ENCODE measurements at regions of chr6 and their contacts with region 1.

Region 1: DNA sequence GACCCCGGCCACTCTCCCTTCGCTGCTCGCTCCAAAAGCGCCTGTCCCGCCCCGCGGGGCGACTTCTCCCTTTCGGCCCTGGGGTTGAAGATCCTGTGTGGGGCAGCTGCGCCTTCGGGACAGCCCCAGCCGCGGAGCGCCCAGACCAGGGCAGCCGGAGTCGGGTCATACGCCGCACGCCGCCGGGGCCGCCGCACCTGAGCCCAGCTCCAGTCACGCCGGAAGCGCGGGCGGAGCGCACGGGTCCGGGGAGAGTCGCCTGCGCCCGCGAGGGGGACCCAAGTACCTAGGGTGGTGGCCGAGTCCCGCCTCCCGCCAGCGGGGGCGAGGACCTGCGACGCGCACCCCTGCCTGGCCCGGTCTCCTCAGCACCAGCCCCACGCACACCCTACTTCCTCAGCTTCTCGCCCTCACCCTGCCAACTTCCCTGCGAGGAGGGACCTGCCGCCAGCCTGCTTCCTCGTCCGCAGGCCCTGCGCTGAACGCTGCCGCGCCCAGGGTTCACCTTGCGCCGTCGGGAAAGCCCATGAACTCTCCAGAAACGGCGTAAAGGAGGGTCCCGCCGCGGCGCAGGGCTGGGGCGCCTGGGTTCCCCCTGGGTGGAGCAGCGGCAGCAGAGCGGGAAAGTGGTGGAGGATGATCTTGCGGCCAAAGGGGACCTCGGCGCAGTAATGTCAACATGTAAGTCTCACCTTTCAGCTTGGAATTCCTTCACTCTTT is at the start of gene ADGRG6:
- DNase-seq: peak; percentile 65
- H3K4me3 ChIP-seq: peak within 1 kb of the TSS; percentile 69 to 78 (median 70)
- H3K27ac ChIP-seq: peak within 1 kb of the TSS; percentile 78
- H3K4me1 ChIP-seq: peaks cover 43% of the 10 kb centered on the region
- H3K27me3 ChIP-seq: no peaks in the 10 kb centered on the region
- CTCF ChIP-seq: peak in 1 of 2 donors; percentile 25
- total RNA-seq, gene ADGRG6: 23.5 to 28.5 TPM

Region 2: GRCh38 chr6:142167486-142167885 is 134.3 kb before region 1 on chr6:
- CTCF ChIA-PET with region 1: no interaction called
- dilution Hi-C with region 1: no loop called
- in situ Hi-C with region 1: no loop called
- intact Hi-C with region 1: no loop called
- DNase-seq: no peak
- H3K4me3 ChIP-seq: no peak overlapping the region
- H3K27ac ChIP-seq: no peak overlapping the region
- H3K4me1 ChIP-seq: no peaks in the 10 kb centered on the region
- H3K27me3 ChIP-seq: no peaks in the 10 kb centered on the region
- CTCF ChIP-seq: no peak

Region 3: DNA sequence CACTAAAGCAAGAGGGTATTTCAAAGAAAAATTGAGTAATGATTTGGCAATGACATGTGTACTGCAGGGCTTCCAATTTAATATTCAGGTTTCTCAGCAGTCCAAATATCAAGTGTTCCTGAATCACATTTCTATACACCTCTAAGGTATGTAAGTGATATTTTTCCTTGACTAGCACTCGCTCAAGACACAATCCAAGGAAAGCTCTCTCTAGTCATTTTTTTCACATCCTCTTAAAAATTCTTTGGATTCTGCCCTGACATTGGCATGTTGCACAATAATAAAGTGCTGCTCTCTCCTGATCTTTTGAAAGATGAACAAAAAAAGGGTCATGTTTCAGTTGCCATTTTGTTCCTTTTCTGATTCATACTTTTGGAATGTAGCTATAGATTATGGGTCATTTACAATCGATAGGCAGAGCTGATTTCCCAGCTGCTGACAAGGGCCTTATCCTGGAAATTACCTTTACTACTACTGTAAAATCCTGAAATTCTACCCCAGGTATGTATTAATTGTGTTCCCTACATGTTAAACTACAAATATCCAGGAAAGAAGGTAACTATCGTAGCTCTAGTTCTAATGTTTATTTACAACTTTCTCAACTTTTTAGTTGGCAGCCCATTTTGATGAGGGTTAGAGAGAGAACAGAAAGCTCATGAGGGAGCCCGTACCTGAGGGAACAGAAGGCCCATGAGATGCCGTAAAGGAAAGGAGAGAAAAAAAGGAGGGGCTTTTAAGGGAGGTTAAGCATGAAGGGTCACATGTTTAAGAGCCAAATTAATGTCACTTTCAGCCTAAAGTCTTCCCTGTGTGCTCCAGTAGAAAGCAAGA is 22.2 kb before region 1 on chr6:
- CTCF ChIA-PET with region 1: no interaction called
- dilution Hi-C with region 1: no loop called
- in situ Hi-C with region 1: no loop called
- intact Hi-C with region 1: no loop called
- DNase-seq: no peak
- H3K4me3 ChIP-seq: no peak overlapping the region
- H3K27ac ChIP-seq: no peak overlapping the region
- H3K4me1 ChIP-seq: peaks cover 9% of the 10 kb centered on the region
- H3K27me3 ChIP-seq: no peaks in the 10 kb centered on the region
- CTCF ChIP-seq: no peak

Region 4: DNA sequence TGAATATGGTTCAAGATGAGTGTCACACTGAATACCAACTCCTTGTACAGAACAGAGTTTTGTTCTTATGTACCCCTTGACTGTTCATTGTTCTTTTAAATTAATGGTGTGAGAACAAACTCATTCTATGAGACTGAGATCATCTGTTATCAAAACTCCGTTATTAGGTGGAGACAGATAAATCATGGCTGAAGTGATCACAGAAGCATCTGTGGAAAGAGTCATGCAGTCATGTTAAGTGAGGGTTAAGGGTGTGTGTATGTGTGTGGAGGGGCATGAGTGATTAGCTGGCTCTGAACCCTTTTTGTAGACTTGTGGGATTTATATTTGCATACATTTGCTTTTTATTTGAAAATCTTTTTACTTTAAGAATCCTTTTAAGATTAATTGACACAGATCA is 24.7 kb after region 1 on chr6:
- CTCF ChIA-PET with region 1: no interaction called
- dilution Hi-C with region 1: no loop called
- in situ Hi-C with region 1: no loop called
- intact Hi-C with region 1: loop called (anchors 2 kb)
- DNase-seq: no peak
- H3K4me3 ChIP-seq: no peak overlapping the region
- H3K27ac ChIP-seq: no peak overlapping the region
- H3K4me1 ChIP-seq: peaks cover 30% of the 10 kb centered on the region
- H3K27me3 ChIP-seq: no peaks in the 10 kb centered on the region
- CTCF ChIP-seq: no peak

Region 5: DNA sequence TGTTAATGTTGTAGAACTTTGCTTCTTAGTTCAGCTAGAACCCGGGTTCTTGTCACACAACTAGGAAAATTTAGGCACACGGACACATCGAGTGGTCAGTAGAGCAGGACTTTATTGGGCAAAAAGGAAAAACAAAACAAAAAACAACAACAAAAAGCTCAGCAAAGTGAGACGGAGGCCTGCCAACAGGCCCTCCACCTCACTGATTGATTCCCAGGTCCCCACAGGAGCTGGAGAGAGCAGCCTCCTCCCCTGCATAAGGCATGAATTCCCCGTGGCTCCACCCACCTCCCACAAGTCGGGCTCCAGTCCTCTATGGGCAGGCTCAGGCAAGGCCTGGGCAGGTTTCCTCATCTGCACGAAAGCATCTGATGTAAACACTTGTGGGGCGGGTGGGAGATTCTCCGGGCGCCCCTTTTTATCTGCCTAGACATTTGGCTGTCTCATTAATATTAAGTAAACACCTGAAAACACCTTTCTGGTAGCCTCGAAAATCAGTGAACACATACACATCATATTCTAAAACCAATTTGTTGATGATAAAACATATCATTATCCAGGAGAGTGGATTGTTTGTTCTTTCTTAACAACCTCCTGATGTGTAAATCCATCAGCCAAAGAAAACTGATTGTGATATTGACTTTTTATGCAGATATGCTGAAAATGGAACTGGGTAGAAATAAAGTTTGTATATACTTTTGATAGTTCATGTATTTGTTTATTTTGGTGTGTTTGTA is 75.5 kb after region 1 on chr6:
- CTCF ChIA-PET with region 1: no interaction called
- dilution Hi-C with region 1: no loop called
- in situ Hi-C with region 1: no loop called
- intact Hi-C with region 1: loop called (anchors 2 kb)
- DNase-seq: peak; percentile 84
- H3K4me3 ChIP-seq: peak overlapping the region in 1 of 3 experiments; percentile 26
- H3K27ac ChIP-seq: peak overlapping the region; percentile 76
- H3K4me1 ChIP-seq: peaks cover 63% of the 10 kb centered on the region
- H3K27me3 ChIP-seq: no peaks in the 10 kb centered on the region
- CTCF ChIP-seq: no peak

Region 6: GRCh38 chr6:142387997-142388815 is 86.4 kb after region 1 on chr6:
- CTCF ChIA-PET with region 1: no interaction called
- dilution Hi-C with region 1: no loop called
- in situ Hi-C with region 1: no loop called
- intact Hi-C with region 1: loop called (anchors 1 kb)
- DNase-seq: peak; percentile 16
- H3K4me3 ChIP-seq: no peak overlapping the region
- H3K27ac ChIP-seq: no peak overlapping the region
- H3K4me1 ChIP-seq: no peaks in the 10 kb centered on the region
- H3K27me3 ChIP-seq: no peaks in the 10 kb centered on the region
- CTCF ChIP-seq: peak; percentile 70 to 71